GM12878 (cell line): ENCODE measurements at regions of chr11 and their contacts with region 1.

Region 1: DNA sequence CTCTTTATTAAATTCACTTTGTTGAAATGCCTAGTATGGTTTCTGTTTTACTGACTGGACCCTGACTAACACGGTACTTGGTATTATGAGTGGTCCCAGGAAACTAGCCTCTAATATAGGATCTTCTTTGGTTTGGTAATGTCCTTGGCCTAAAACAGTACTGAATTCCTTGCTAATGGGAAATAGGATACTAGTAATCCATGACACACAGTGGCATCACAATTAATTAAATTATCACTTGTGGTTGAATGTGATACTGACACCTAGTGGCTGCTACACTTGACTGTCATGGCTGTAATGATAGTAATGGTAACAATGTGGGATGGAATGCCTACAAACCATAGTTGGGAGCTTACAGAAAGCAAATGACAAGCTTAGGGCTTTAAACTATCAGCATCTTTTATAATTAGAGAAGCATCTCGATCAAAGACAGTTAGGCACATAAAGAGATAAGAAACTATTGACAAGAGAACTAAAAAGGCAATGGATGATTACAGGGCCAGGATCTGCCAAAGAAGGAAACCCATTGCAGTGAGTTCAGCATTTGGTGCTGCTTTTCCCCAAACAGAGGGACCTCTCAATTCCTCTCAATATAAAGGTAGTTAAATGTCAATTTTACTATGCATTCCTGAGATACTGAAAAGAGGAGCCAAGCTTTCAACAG is 8.6 kb downstream of the DNHD1 start:
- DNase-seq: no peak
- ATAC-seq: peak; percentile 91
- H3K4me3 ChIP-seq: no peak overlapping the region
- H3K27ac ChIP-seq: no peak overlapping the region
- H3K4me1 ChIP-seq: no peaks in the 10 kb centered on the region
- H3K27me3 ChIP-seq: no peaks in the 10 kb centered on the region
- CTCF ChIP-seq: peak; percentile 66 to 71 (median 69); a peak in 5 of 6 replicates
- EP300 ChIP-seq: no peak
- POLR2A ChIP-seq: no peak
- RAD21 ChIP-seq: peak; percentile 58

Region 2: DNA sequence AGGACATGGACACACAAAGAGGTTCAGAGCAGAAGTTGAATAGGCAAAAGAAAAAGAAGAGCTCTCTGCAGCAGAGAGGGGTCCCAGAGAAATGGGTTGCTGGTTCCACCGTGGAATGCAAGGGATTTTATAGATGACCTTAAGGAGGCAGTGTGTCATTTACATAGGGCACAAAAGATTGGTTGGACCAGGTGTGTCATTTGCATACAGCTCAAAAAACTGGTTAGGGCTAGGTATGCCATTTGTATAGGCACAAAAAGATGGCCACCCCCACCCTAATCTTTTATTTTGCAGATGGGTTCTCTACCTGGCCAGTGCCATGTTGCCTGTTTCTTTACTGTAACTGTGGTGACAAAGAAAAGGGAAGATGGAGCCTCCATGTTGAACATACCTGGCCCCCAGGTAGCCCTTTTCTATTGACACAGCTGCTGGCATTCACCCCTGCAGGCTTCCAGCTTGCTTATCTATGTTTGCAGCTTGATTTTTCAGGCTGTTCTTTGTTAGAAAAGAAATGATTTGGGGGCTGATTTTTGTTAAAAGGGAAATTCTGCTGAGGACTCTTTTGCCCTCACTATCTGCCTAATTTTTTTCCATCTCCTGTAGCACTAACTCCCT is 182.3 kb before region 1 on chr11:
- CTCF ChIA-PET with region 1: no interaction called
- POLR2A ChIA-PET with region 1: no interaction called
- RAD21 ChIA-PET with region 1: no interaction called
- SMC1A ChIA-PET with region 1: no interaction called
- in situ Hi-C with region 1: no loop called
- intact Hi-C with region 1: no loop called
- DNase-seq: no peak
- ATAC-seq: no peak
- H3K4me3 ChIP-seq: no peak overlapping the region
- H3K27ac ChIP-seq: no peak overlapping the region
- H3K4me1 ChIP-seq: peaks cover 26% of the 10 kb centered on the region
- H3K27me3 ChIP-seq: no peaks in the 10 kb centered on the region
- CTCF ChIP-seq: no peak
- EP300 ChIP-seq: no peak
- POLR2A ChIP-seq: no peak
- RAD21 ChIP-seq: no peak

Region 3: DNA sequence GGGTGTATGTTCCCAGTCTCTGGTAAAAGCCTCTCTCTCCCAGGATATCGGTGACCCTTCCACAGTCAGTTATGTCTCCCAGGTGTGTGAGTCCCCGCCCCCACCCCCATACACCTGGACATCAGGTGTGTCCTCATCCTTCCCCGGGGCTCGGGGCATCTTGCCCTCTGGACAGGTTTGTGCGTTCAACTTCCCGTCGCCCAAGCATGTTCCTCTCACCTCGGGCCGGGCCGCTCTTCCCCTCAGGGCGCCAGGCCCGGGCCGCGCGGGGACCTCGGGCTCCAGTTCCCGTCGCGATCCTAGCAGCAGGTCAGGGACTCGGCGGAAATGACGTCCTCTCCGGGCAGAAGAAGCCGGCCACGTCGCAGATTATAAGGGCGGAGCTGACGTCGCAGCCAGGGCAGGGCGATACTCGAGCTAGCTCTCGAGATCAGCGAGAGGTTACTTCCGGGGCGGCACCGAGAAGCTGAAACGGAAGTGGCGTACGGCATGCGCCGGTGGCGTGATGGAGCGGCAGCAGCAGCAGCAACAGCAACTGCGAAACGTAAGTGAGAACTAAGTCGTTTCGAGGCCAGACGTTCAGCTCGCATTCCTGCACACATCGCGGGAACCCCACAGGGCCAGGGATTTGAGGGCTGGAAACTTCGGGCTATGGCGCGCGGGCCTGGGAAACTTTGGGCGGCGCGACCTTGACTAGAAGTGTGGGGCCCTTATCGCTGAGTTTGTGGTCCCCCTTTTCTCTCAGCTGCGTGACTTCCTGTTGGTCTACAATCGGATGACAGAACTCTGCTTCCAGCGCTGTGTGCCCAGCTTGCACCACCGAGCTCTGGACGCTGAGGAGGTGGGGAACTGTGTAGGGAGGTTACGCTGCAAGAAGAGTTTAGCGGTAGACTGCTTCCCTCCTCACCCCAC is 24.4 kb before region 1 on chr11 and contains the starts of genes ARFIP2 and TIMM10B:
- CTCF ChIA-PET with region 1: interaction called, 119 read pairs
- POLR2A ChIA-PET with region 1: no interaction called
- RAD21 ChIA-PET with region 1: no interaction called
- SMC1A ChIA-PET with region 1: interaction called, 9 read pairs
- in situ Hi-C with region 1: no loop called
- intact Hi-C with region 1: no loop called
- DNase-seq: peak; percentile 91
- ATAC-seq: peak; percentile 98
- H3K4me3 ChIP-seq: peak within 1 kb of the TSS; percentile 98
- H3K27ac ChIP-seq: peak within 1 kb of the TSS; percentile 80
- H3K4me1 ChIP-seq: peaks cover 19% of the 10 kb centered on the region
- H3K27me3 ChIP-seq: no peaks in the 10 kb centered on the region
- CTCF ChIP-seq: no peak
- EP300 ChIP-seq: no peak
- POLR2A ChIP-seq: peak; percentile 98
- RAD21 ChIP-seq: no peak
- polyA plus RNA-seq, gene ARFIP2: 11.7 to 18.9 TPM
- polyA plus RNA-seq, gene TIMM10B: 93.3 to 126 TPM

Region 4: GRCh38 chr11:6523253-6523652 is 17.5 kb after region 1 on chr11:
- CTCF ChIA-PET with region 1: interaction called, 11 read pairs
- POLR2A ChIA-PET with region 1: interaction called, 3 read pairs
- RAD21 ChIA-PET with region 1: interaction called, 3 read pairs
- SMC1A ChIA-PET with region 1: interaction called, 5 read pairs
- in situ Hi-C with region 1: no loop called
- intact Hi-C with region 1: no loop called
- DNase-seq: no peak
- ATAC-seq: no peak
- H3K4me3 ChIP-seq: no peak overlapping the region
- H3K27ac ChIP-seq: no peak overlapping the region
- H3K4me1 ChIP-seq: peaks cover 12% of the 10 kb centered on the region; the same call in 1 of the 2 replicates
- H3K27me3 ChIP-seq: no peaks in the 10 kb centered on the region
- CTCF ChIP-seq: no peak
- EP300 ChIP-seq: no peak
- POLR2A ChIP-seq: no peak
- RAD21 ChIP-seq: no peak

Region 5: GRCh38 chr11:6531267-6531752 is 25.6 kb after region 1 on chr11:
- CTCF ChIA-PET with region 1: interaction called, 15 read pairs
- POLR2A ChIA-PET with region 1: no interaction called
- RAD21 ChIA-PET with region 1: interaction called, 3 read pairs
- SMC1A ChIA-PET with region 1: interaction called, 5 read pairs
- in situ Hi-C with region 1: no loop called
- intact Hi-C with region 1: no loop called
- DNase-seq: peak; percentile 27
- ATAC-seq: peak; percentile 80
- H3K4me3 ChIP-seq: no peak overlapping the region
- H3K27ac ChIP-seq: no peak overlapping the region
- H3K4me1 ChIP-seq: peaks cover 8% of the 10 kb centered on the region; the same call in 1 of the 2 replicates
- H3K27me3 ChIP-seq: no peaks in the 10 kb centered on the region
- CTCF ChIP-seq: peak; percentile 66 to 73 (median 70)
- EP300 ChIP-seq: no peak
- POLR2A ChIP-seq: no peak
- RAD21 ChIP-seq: peak; percentile 89

Region 6: DNA sequence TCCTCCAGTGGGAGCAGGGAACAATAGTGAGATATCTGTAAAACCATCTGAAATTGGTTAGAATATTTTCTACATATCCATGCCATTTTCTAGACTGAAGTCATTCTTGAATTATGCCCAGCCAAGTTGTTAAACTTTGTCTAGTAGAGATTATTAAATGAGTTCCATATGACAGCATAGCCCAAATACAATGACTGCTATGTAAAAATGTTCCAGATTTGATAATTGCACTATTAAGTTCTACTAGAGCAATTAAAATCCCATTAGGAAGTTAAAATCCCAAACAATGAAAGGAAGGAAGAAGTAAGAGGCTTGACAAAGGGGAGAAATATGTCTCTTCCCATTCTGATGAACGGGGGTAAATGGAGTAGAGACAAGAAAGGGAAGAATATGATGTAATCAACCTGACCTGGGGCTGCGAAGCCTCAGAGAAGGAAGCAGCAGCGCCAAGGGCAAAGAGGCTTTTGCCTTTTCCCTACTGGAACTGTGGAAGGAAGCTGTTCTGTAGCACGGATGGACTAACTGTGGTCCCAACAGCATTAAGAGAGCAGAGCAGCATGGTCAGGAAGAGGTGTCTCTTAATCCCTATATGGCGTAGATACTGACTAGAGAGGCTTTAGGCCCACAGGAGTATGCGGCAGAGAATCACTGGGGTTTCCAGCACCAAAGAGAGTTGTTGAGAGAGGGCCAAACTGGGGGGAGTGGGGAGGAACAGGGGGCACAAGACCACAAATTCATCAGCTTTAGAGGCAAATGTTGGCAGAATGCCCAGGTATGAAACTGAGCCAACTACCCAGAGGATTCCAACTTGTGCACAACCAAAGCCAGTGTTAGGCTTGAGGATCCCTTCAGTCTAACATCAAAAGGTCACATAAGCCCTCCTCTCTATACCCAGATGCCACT is 71.0 kb after region 1 on chr11:
- CTCF ChIA-PET with region 1: no interaction called
- POLR2A ChIA-PET with region 1: no interaction called
- RAD21 ChIA-PET with region 1: no interaction called
- SMC1A ChIA-PET with region 1: no interaction called
- in situ Hi-C with region 1: no loop called
- intact Hi-C with region 1: no loop called
- DNase-seq: no peak
- ATAC-seq: no peak
- H3K4me3 ChIP-seq: no peak overlapping the region
- H3K27ac ChIP-seq: no peak overlapping the region
- H3K4me1 ChIP-seq: no peaks in the 10 kb centered on the region
- H3K27me3 ChIP-seq: no peaks in the 10 kb centered on the region
- CTCF ChIP-seq: no peak
- EP300 ChIP-seq: no peak
- POLR2A ChIP-seq: no peak
- RAD21 ChIP-seq: no peak